ENCODE measurements at regions of chr2 and their contacts with region 1.

Region 1: GRCh38 chr2:135741395-135742324 is at the start of gene UBXN4:
- DNase-seq: peak; percentile 97
- H3K4me3 Mint-ChIP-seq: peak within 1 kb of the TSS; percentile 95
- H3K27ac Mint-ChIP-seq: peak within 1 kb of the TSS; percentile 99
- H3K4me1 Mint-ChIP-seq: peaks cover 25% of the 10 kb centered on the region
- H3K27me3 Mint-ChIP-seq: no peaks in the 10 kb centered on the region
- total RNA-seq, gene UBXN4: 98.1 to 116 TPM

Region 2: DNA sequence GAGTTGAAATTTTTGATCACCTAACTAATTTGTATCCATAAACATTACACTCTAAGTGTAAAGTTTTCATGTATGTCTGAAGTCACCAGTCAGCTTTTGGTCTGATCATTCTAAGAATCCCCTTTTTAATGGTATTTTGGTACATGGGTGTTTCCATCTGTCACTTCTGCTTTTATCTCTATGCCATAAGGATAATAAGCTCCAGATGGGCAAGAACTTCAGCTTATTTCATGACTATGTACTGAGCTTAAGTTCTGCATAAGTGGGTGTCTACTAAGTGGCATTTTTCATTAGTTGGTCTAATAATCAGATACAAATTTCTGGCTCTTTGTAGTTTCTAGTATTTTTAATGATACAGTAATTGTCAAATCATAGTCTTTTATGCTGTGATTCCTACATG is 20.4 kb after region 1 on chr2:
- CTCF ChIA-PET with region 1: interaction called, 13 read pairs
- POLR2A ChIA-PET with region 1: no interaction called
- DNase-seq: no peak
- H3K4me3 Mint-ChIP-seq: no peak overlapping the region
- H3K27ac Mint-ChIP-seq: no peak overlapping the region
- H3K4me1 Mint-ChIP-seq: no peaks in the 10 kb centered on the region
- H3K27me3 Mint-ChIP-seq: no peaks in the 10 kb centered on the region

Region 3: DNA sequence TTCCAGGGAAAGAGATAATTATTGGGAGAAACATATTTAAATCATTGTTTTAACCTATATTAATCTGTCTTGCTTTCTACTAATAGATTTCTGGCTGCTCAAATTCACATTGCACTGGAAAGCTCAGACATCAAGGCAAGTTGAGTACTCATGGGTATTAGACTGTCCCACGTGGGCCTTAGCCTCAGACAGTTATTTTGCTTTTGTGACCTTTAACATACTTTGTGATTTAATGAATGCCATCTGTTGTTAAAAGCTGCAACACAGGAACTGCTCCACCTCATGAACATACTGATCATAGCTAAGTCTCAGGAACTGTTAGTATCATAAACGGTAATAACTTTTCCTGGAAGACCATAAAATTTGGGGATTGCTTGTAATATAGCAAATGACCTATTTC is 98.1 kb after region 1 on chr2:
- CTCF ChIA-PET with region 1: no interaction called
- POLR2A ChIA-PET with region 1: no interaction called
- DNase-seq: no peak
- H3K4me3 Mint-ChIP-seq: no peak overlapping the region
- H3K27ac Mint-ChIP-seq: no peak overlapping the region
- H3K4me1 Mint-ChIP-seq: peaks cover 42% of the 10 kb centered on the region
- H3K27me3 Mint-ChIP-seq: no peaks in the 10 kb centered on the region